ENCODE measurements at regions of chr14 and their contacts with region 1.

Region 1: GRCh38 chr14:96735526-96735925 is 61.7 kb upstream of the VRK1 start:
- DNase-seq: no peak
- CTCF ChIP-seq: no peak

Region 2: GRCh38 chr14:96584199-96584906 is 151.2 kb before region 1 on chr14:
- in situ Hi-C with region 1: loop called (anchors 10 kb)
- DNase-seq: peak; percentile 83
- CTCF ChIP-seq: peak; percentile 66

Measured in GM13976 (cell line).